ENCODE measurements at regions of chr3 and their contacts with region 1.

Region 1: DNA sequence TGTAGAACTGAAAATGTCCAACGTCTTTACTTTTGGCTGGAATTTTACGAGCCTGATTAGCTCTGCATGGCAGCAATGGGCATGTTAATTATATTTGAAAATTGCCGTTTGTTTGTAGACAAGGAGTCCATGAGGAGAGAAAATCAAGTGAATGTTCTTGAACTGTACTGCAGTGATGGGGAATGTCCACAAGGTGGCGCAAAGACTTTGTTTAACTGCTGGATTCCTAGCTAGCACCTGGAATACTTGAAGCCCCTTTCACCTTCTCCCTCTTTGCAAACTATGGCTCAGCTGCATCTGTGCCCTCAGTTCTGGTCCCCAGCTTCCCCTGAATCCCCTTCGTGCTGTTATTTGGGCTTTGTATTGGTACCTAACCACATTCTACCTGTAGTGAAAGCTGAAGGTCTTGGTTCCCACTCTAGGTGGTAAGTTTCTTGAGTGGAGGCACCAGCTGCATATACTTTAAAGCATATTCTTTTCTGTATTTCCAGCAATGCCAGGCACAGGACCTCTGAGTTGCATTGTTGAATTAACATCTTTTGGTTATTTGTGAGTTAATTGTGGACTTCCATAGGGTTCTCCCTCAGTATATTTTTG is 25.3 kb downstream of the EXOG start:
- DNase-seq: peak; percentile 75

Region 2: GRCh38 chr3:38651154-38651789 is 129.8 kb after region 1 on chr3:
- in situ Hi-C with region 1: loop called (anchors 25 kb)
- DNase-seq: peak; percentile 77

Measured in SK-MEL-5 (cell line).